Activated T-helper 1 cell treated with anti-CD3 and anti-CD28 coated beads, Interleukin-12 subunit alpha, Interleukin-12 subunit beta, Interleukin-2, Interleukin-4 antibody, amounts not matched to agents 30 ng/mL and 10 ng/mL and 1 ng/mL, durations not matched to agents 14 hours and 24 hours and 36 hours (primary cell): ENCODE measurements at regions of chr2 and their contacts with region 1.

Region 1: GRCh38 chr2:35973132-35973736 is 382.3 kb upstream of the CRIM1 start:
- DNase-seq: no peak
- H3K4me3 Mint-ChIP-seq: no peak overlapping the region
- H3K27ac Mint-ChIP-seq: no peak overlapping the region
- H3K4me1 Mint-ChIP-seq: no peaks in the 10 kb centered on the region
- H3K27me3 Mint-ChIP-seq: peaks cover 16% of the 10 kb centered on the region

Region 2: GRCh38 chr2:35803120-35803519 is 170.1 kb before region 1 on chr2:
- intact Hi-C with region 1: no loop called
- DNase-seq: no peak
- H3K4me3 Mint-ChIP-seq: no peak overlapping the region
- H3K27ac Mint-ChIP-seq: no peak overlapping the region
- H3K4me1 Mint-ChIP-seq: no peaks in the 10 kb centered on the region
- H3K27me3 Mint-ChIP-seq: no peaks in the 10 kb centered on the region

Region 3: GRCh38 chr2:36322108-36322507 is 348.9 kb after region 1 on chr2:
- intact Hi-C with region 1: loop called (anchors 2 kb)
- DNase-seq: no peak
- H3K4me3 Mint-ChIP-seq: no peak overlapping the region
- H3K27ac Mint-ChIP-seq: no peak overlapping the region
- H3K4me1 Mint-ChIP-seq: peaks cover 8% of the 10 kb centered on the region
- H3K27me3 Mint-ChIP-seq: peaks cover 25% of the 10 kb centered on the region

Region 4: GRCh38 chr2:36468463-36469105 is 495.4 kb after region 1 on chr2:
- intact Hi-C with region 1: no loop called
- DNase-seq: no peak
- H3K4me3 Mint-ChIP-seq: no peak overlapping the region
- H3K27ac Mint-ChIP-seq: no peak overlapping the region
- H3K4me1 Mint-ChIP-seq: no peaks in the 10 kb centered on the region
- H3K27me3 Mint-ChIP-seq: peaks cover 2% of the 10 kb centered on the region

Region 5: GRCh38 chr2:36507408-36507812 is 534.2 kb after region 1 on chr2:
- intact Hi-C with region 1: loop called (anchors 5 kb)
- DNase-seq: no peak
- H3K4me3 Mint-ChIP-seq: no peak overlapping the region
- H3K27ac Mint-ChIP-seq: no peak overlapping the region
- H3K4me1 Mint-ChIP-seq: no peaks in the 10 kb centered on the region
- H3K27me3 Mint-ChIP-seq: no peaks in the 10 kb centered on the region

Region 6: GRCh38 chr2:36663851-36664695 is 690.8 kb after region 1 on chr2:
- intact Hi-C with region 1: loop called (anchors 1 kb)
- DNase-seq: no peak
- H3K4me3 Mint-ChIP-seq: no peak overlapping the region
- H3K27ac Mint-ChIP-seq: no peak overlapping the region
- H3K4me1 Mint-ChIP-seq: no peaks in the 10 kb centered on the region
- H3K27me3 Mint-ChIP-seq: peaks cover 5% of the 10 kb centered on the region